ENCODE measurements at regions of chr21 and their contacts with region 1.

Region 1: DNA sequence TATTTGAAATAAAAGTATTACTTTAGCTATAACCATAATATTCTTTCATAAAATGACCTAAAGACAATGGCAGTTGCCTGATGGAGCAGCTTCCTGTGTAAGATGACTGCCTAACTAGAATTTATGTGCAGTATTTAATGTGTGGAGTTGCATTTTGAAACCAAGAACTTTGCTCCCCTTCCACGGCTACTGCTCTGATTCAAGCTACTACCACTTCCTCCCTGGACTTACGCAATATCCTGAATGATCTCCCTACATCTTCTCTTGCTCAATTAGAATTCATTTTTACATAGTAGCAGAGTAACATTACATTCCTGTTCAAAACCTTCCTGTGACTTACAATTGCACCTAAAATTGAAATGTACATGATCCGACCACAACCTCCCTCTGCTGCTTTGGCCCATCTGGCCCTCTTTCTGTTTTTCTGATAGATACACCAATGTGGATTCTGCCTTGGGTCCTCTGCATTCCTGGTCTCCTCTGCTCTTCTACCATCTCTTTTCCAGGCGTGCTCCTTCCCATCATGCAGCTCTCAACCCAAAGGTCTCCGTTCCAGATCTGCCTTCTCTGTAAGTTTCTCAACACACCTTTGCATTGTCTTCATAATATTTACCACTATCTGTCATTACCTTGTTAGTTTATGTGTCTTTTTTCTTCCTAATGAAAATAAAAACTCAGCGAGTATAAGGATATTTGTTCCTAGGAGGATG is 47.4 kb upstream of the USP25 start:
- DNase-seq: peak; percentile 84 to 91 (median 89)
- H3K4me3 ChIP-seq: peak overlapping the region; percentile 38 to 78 (median 57)
- H3K4me3 Mint-ChIP-seq: peak overlapping the region; percentile 72 to 91
- H3K27ac ChIP-seq: peak overlapping the region; percentile 85 to 93
- H3K27ac Mint-ChIP-seq: peak overlapping the region; percentile 94 to 99 (median 96)
- H3K4me1 ChIP-seq: peaks cover 57 to 66% of the 10 kb centered on the region in 2 donors
- H3K4me1 Mint-ChIP-seq: peaks cover 48% of the 10 kb centered on the region
- H3K27me3 ChIP-seq: no peaks in the 10 kb centered on the region
- H3K27me3 Mint-ChIP-seq: no peaks in the 10 kb centered on the region
- CTCF ChIP-seq: no peak

Region 2: GRCh38 chr21:14877570-14878228 is 804.6 kb before region 1 on chr21:
- intact Hi-C with region 1: loop called in 1 of 2 experiments (anchors 10 kb)
- DNase-seq: peak; percentile 69 to 88 (median 77)
- H3K4me3 ChIP-seq: peak overlapping the region in 1 of 3 experiments; percentile 4
- H3K4me3 Mint-ChIP-seq: peak overlapping the region in 1 of 2 donors; percentile 29
- H3K27ac ChIP-seq: no peak overlapping the region
- H3K27ac Mint-ChIP-seq: peak overlapping the region in 5 of 7 donors; percentile 61 to 88 (median 70)
- H3K4me1 ChIP-seq: peaks cover 33 to 38% of the 10 kb centered on the region in 2 donors
- H3K4me1 Mint-ChIP-seq: peaks cover 41% of the 10 kb centered on the region
- H3K27me3 ChIP-seq: no peaks in the 10 kb centered on the region
- H3K27me3 Mint-ChIP-seq: peaks cover 0 to 3% (median 2%) of the 10 kb centered on the region in 3 donors
- CTCF ChIP-seq: no peak

Region 3: GRCh38 chr21:15206514-15206913 is 475.8 kb before region 1 on chr21:
- intact Hi-C with region 1: loop called in 1 of 2 experiments (anchors 10 kb)
- DNase-seq: peak; percentile 55 to 85 (median 74)
- H3K4me3 ChIP-seq: peak overlapping the region in 2 of 3 experiments; percentile 37 to 63
- H3K4me3 Mint-ChIP-seq: peak overlapping the region; percentile 48 to 86
- H3K27ac ChIP-seq: peak overlapping the region; percentile 39 to 77
- H3K27ac Mint-ChIP-seq: peak overlapping the region; percentile 94 to 96 (median 95)
- H3K4me1 ChIP-seq: peaks cover 70 to 79% of the 10 kb centered on the region in 2 donors
- H3K4me1 Mint-ChIP-seq: peaks cover 76% of the 10 kb centered on the region
- H3K27me3 ChIP-seq: no peaks in the 10 kb centered on the region
- H3K27me3 Mint-ChIP-seq: peaks cover 0 to 2% (median 0%) of the 10 kb centered on the region in 3 donors
- CTCF ChIP-seq: no peak

Measured in CD14-positive monocyte (primary cell).